Right ventricle myocardium inferior (tissue), 1 donor: ENCODE measurements at regions of chr2 and their contacts with region 1.

Region 1: GRCh38 chr2:157302492-157303099 is 23.0 kb downstream of the ERMN start:
- DNase-seq: no peak
- ATAC-seq: peak; percentile 54

Region 2: DNA sequence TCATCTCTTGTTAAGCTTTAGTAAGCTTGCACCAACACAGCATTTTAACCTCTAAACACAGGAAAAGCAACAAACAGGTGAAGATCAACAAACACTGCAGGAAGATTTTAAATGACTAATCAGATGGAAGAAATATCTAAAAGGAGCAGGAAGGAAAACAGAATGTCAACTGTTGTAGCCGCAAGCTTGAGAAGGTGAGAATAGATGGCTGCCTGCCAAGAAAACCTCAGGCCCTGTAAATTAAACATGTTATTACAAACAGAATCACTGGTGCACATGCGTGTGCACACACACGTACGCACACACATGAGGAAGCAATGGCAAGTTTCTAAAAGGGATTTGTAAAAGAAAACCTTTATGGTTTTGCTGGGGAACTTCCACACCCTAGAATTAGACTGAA is 302.9 kb before region 1 on chr2:
- intact Hi-C with region 1: no loop called
- DNase-seq: no peak
- ATAC-seq: no peak

Region 3: DNA sequence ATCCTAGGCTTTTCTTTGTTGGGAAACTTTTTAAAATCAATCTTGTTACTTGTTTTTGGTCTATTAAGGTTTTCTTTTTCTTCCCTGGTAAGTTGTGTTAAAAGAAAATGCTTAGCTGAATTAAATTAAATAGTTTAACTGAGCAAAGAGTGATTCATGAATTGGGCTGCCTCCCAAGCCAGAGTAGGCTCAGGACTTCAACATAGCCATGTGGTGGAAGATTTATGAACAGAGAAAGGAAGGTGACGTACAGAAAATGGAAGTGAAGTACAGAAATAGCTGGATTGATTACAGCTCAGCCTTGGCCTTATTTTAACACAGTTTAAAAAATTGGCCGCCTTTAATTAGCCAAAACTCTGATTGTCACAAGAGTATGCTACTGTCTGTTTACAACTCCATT is 73.0 kb before region 1 on chr2:
- intact Hi-C with region 1: no loop called
- DNase-seq: no peak
- ATAC-seq: no peak

Region 4: DNA sequence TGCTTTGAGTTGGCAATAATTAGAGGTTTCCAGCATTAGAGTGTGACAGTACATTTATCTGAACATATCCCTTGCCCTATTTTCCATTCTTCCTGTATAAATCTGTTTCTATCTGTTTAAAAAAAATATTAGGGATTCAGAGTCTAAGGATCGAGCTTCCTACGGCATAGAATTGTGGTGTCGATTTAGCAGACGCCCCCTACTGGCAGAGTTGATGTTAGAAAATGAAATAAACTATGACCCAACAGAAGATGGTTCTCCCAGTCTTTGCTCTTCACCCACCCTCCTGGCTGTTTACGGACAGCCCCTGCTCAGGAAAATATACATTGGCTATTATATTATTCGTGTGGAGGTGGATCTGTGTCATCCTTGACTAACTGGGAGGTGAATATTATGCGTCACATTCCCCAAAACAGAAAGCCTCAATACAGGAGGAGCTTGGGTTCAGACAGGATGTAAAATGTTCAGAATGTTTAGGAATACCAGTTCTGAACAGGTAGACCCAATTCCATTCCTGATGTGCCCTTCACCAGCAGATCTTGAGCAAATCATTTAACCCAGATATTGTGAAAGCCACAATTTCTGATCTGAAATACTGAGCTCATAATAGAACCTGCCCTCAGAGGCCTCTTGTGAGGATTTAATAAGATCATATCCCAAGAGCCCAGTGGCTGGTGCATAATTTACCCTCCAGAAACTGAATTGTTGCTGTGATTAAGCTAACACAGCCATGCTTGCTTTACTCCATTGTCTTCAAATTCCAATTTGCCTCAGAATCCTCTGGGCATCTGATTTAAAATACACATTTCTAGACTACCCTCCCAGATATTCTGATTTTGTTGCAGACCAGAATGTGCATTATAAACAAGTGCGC is 33.8 kb after region 1 on chr2:
- intact Hi-C with region 1: loop called (anchors 5 kb)
- DNase-seq: no peak
- ATAC-seq: no peak

Region 5: DNA sequence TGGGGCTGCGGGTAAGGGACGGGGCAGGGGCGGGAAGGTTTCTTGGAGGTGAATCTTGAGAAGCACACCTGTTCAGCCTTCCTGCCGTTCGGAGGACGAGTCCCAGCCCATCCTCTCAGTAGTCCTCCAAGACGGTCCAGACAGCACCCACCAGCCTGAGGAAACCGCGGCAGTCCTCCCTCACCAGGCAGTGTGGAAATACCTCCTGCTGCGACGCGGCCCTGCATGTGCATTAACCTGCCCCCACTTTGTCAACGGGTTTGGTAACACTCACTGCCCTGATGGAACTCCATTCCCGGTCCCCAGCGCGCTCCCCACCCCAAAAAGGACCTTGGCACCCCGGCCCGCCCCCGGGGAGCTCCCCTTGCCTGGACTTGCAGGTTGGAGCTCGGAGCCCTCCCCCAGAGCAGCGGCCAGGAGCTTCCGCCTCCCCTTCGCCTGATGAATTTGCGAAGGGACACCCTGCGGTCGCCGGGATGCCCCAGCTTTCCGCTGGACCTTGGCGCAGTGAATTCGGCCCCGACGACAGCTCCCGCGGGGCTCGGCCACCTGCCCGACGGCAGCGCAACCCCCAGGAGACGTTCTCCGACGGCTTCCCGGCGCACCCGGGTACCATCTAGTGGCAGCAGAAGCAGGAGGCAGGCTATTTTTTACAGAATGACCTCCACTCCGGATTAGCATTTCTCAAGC is 294.5 kb after region 1 on chr2:
- intact Hi-C with region 1: loop called (anchors 5 kb)
- DNase-seq: peak; percentile 68
- ATAC-seq: no peak